Activated CD8-positive, alpha-beta T cell treated with anti-CD3 and anti-CD28 coated beads for 36 hours (primary cell): ENCODE measurements at regions of chr12 and their contacts with region 1.

Region 1: GRCh38 chr12:25386831-25387731 is 136.4 kb upstream of the KRAS start:
- DNase-seq: peak; percentile 85
- ATAC-seq: peak; percentile 21
- H3K4me3 Mint-ChIP-seq: peak overlapping the region; percentile 89
- H3K27ac Mint-ChIP-seq: peak overlapping the region; percentile 99
- H3K4me1 Mint-ChIP-seq: peaks cover 43% of the 10 kb centered on the region
- H3K27me3 Mint-ChIP-seq: peaks cover 2% of the 10 kb centered on the region
- CTCF ChIP-seq: peak; percentile 79

Region 2: GRCh38 chr12:25241167-25242020 is 145.7 kb before region 1 on chr12:
- CTCF ChIA-PET with region 1: no interaction called
- POLR2A ChIA-PET with region 1: interaction called, 9 read pairs
- intact Hi-C with region 1: loop called (anchors 1 kb)
- DNase-seq: peak; percentile 65
- ATAC-seq: peak; percentile 90
- H3K4me3 Mint-ChIP-seq: no peak overlapping the region
- H3K27ac Mint-ChIP-seq: no peak overlapping the region
- H3K4me1 Mint-ChIP-seq: peaks cover 56% of the 10 kb centered on the region
- H3K27me3 Mint-ChIP-seq: no peaks in the 10 kb centered on the region
- CTCF ChIP-seq: peak; percentile 83

Region 3: GRCh38 chr12:25295361-25295760 is 91.7 kb before region 1 on chr12:
- CTCF ChIA-PET with region 1: interaction called, 10 read pairs
- POLR2A ChIA-PET with region 1: interaction called, 4 read pairs
- intact Hi-C with region 1: no loop called
- DNase-seq: no peak
- ATAC-seq: no peak
- H3K4me3 Mint-ChIP-seq: no peak overlapping the region
- H3K27ac Mint-ChIP-seq: no peak overlapping the region
- H3K4me1 Mint-ChIP-seq: peaks cover 13% of the 10 kb centered on the region
- H3K27me3 Mint-ChIP-seq: no peaks in the 10 kb centered on the region
- CTCF ChIP-seq: no peak

Region 4: DNA sequence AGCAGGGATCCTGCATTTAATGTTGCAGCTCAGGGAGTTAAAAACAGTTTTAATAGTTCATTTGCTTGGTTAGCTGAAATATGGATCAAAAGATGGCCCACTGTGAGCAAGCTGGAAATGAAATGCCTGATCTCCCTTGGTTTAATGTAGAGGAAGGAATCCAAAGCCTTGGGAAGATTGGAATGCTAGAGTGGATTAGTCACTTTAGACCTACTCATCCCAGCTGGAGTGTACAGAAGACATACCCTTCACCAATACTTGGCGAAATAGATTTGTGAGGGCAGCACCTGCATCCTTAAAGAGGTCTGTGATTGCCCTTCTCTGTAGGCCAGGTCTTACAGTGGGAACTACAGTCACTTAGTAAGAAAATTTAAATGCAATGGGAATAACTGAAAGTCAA is 78.3 kb before region 1 on chr12:
- CTCF ChIA-PET with region 1: no interaction called
- POLR2A ChIA-PET with region 1: no interaction called
- intact Hi-C with region 1: no loop called
- DNase-seq: no peak
- ATAC-seq: no peak
- H3K4me3 Mint-ChIP-seq: no peak overlapping the region
- H3K27ac Mint-ChIP-seq: no peak overlapping the region
- H3K4me1 Mint-ChIP-seq: no peaks in the 10 kb centered on the region
- H3K27me3 Mint-ChIP-seq: no peaks in the 10 kb centered on the region
- CTCF ChIP-seq: no peak

Region 5: GRCh38 chr12:25320123-25321006 is 66.7 kb before region 1 on chr12:
- CTCF ChIA-PET with region 1: interaction called, 18 read pairs
- POLR2A ChIA-PET with region 1: interaction called, 3 read pairs
- intact Hi-C with region 1: no loop called
- DNase-seq: no peak
- ATAC-seq: peak; percentile 51
- H3K4me3 Mint-ChIP-seq: no peak overlapping the region
- H3K27ac Mint-ChIP-seq: peak overlapping the region; percentile 18
- H3K4me1 Mint-ChIP-seq: peaks cover 49% of the 10 kb centered on the region
- H3K27me3 Mint-ChIP-seq: no peaks in the 10 kb centered on the region
- CTCF ChIP-seq: no peak

Region 6: GRCh38 chr12:25744313-25744712 is 357.2 kb after region 1 on chr12:
- CTCF ChIA-PET with region 1: no interaction called
- POLR2A ChIA-PET with region 1: no interaction called
- intact Hi-C with region 1: no loop called
- DNase-seq: no peak
- ATAC-seq: no peak
- H3K4me3 Mint-ChIP-seq: no peak overlapping the region
- H3K27ac Mint-ChIP-seq: no peak overlapping the region
- H3K4me1 Mint-ChIP-seq: no peaks in the 10 kb centered on the region
- H3K27me3 Mint-ChIP-seq: no peaks in the 10 kb centered on the region
- CTCF ChIP-seq: no peak